Spleen (tissue), 13 donors: ENCODE measurements at regions of chr7 and their contacts with region 1.

Region 1: GRCh38 chr7:92868683-92869293 is 32.4 kb upstream of the CDK6 start:
- DNase-seq: no peak
- H3K4me3 ChIP-seq: no peak overlapping the region
- H3K27ac ChIP-seq: no peak overlapping the region
- H3K4me1 ChIP-seq: no peaks in the 10 kb centered on the region
- H3K27me3 ChIP-seq: no peaks in the 10 kb centered on the region
- CTCF ChIP-seq: no peak
- POLR2A ChIP-seq: no peak

Region 2: GRCh38 chr7:92763636-92764423 is 105.0 kb before region 1 on chr7:
- intact Hi-C with region 1: no loop called
- DNase-seq: no peak
- H3K4me3 ChIP-seq: no peak overlapping the region
- H3K27ac ChIP-seq: no peak overlapping the region
- H3K4me1 ChIP-seq: peaks cover 0 to 20% (median 10%) of the 10 kb centered on the region in 6 donors
- H3K27me3 ChIP-seq: no peaks in the 10 kb centered on the region
- CTCF ChIP-seq: no peak
- POLR2A ChIP-seq: no peak

Region 3: DNA sequence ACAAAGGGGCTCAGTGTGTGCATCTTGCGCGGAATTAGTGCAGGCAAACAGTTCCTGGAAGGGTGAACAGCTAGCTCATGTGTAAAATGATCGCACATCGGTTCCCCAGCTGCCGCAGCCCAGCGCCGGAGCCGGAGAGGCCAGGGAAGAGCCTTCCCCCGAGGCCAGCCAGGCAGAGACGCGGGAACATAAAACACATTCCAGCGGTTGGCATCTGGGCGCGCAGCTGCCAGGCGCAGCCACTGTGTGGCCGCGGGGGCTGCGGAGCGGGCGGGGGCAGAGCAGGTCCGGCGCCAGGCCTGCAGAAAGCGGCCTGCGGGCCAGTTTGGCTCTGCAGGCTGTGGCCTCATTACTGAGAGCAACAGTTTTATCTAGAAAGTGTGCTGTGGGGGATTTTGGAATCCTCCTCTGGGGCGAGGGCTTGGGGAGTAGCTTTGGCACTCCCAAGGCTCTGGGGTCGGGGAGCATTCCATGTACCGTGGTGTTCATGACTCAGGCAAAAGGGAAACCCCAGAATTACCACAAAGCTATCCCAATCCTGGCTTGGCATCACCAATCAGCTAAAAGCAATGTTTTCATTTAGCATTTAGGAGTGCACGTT is 174.7 kb after region 1 on chr7:
- intact Hi-C with region 1: loop called (anchors 10 kb)
- DNase-seq: peak; percentile 58
- H3K4me3 ChIP-seq: peak overlapping the region in 2 of 8 donors; percentile 6 to 25
- H3K27ac ChIP-seq: no peak overlapping the region
- H3K4me1 ChIP-seq: peaks cover 0 to 5% (median 0%) of the 10 kb centered on the region in 6 donors
- H3K27me3 ChIP-seq: peaks cover 0 to 6% (median 0%) of the 10 kb centered on the region in 7 donors
- CTCF ChIP-seq: no peak
- POLR2A ChIP-seq: no peak